H1 (cell line): ENCODE measurements at regions of chr17 and their contacts with region 1.

Region 1: DNA sequence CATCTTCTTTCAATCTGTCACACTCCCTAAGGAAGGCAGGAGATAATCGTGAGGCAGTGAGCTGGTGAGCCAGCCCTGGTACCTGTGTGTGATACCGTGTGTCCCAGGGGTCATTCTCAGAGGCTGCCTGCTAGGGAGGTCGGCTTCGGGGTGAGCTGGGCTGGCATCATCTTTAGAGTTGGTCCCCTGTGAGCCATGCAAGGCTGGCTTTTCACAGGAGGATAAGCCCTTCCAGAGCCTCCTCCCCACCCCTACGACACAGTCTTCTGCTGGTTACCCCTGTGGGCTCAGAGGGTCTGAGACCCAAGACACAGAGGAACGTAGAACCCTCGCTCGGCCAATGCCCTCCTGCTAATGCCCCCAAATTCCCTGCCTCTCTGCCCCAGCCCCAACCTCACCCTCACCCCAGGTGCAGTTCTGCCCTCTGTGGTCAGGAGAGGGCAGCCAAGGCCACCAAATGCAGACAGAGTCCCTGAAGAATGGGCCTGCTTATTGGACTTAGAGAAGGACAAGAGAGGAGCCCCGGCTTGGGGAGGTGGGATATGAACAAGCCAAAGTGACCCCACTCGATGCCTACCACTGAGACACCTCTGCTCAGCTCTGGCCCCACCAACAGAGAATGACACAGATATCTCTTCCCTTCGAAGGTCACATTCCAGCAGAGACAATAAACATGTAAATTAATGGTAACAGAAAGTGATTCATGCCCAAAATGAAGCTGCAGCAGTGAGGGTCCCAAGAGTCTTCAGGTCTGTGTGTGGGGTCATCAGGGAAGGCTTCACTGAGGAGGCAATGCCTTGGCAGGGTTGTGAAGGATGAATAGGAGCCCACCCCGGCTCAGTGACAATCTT is 80.8 kb upstream of the CCL1 start:
- DNase-seq: peak in 1 of 2 experiments; percentile 62
- H3K4me3 ChIP-seq: no peak overlapping the region
- H3K27ac ChIP-seq: no peak overlapping the region
- H3K4me1 ChIP-seq: peaks cover 0 to 4% (median under 1%) of the 10 kb centered on the region in 4 experiments; a peak in 1 of 7 replicates
- H3K27me3 ChIP-seq: no peaks in the 10 kb centered on the region
- CTCF ChIP-seq: peak; percentile 80 to 83 (median 81)
- EP300 ChIP-seq: no peak
- POLR2A ChIP-seq: no peak
- RAD21 ChIP-seq: peak; percentile 89 to 93

Region 2: DNA sequence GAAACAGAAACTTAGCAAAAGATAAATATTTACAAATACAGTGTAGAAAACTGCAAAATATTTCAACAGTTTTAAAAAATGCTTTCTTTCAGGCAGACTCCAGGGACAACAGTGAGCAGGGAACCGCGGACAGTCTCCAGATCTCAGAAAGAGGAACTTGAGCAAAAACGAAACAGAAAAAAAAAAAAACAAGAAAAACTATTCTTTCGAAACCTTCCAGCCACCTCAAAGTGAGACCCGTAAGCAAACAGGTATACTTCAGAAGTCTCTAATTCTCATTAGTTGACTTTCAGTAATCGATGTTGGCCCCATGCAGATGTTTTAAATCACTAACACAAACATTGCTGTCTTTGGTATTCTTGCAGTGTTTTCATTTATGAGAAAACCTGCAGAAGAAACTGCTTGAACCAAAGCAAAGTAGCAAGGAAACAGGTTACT is 65.2 kb before region 1 on chr17:
- CTCF ChIA-PET with region 1: no interaction called
- POLR2A ChIA-PET with region 1: no interaction called
- DNase-seq: no peak
- H3K4me3 ChIP-seq: no peak overlapping the region
- H3K27ac ChIP-seq: no peak overlapping the region
- H3K4me1 ChIP-seq: no peaks in the 10 kb centered on the region
- H3K27me3 ChIP-seq: no peaks in the 10 kb centered on the region
- CTCF ChIP-seq: no peak
- EP300 ChIP-seq: no peak
- POLR2A ChIP-seq: no peak
- RAD21 ChIP-seq: no peak

Region 3: DNA sequence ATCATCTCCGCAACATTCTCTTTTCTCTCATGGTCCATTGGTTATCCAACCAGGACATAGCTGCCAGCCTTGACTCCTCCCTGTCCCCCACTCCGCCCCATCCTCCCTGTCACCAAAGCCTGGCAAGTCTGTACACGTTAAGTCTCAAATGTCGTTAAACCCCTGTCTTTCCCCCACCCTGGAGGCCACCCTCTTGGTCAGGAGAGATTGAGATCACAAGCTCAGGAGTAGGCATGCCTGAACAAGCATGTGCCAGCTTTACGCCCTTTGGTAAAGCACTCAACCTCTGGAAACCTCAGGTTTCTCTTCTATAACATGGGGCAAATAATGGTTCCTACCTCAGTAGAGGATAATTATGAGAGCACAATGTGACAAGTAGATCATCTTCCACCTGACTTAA is 42.7 kb before region 1 on chr17:
- CTCF ChIA-PET with region 1: no interaction called
- POLR2A ChIA-PET with region 1: no interaction called
- DNase-seq: no peak
- H3K4me3 ChIP-seq: no peak overlapping the region
- H3K27ac ChIP-seq: no peak overlapping the region
- H3K4me1 ChIP-seq: peaks cover 0 to 4% (median 0%) of the 10 kb centered on the region in 4 experiments; a peak in 2 of 7 replicates
- H3K27me3 ChIP-seq: no peaks in the 10 kb centered on the region; a peak in 2 of 7 replicates
- CTCF ChIP-seq: no peak
- EP300 ChIP-seq: no peak
- POLR2A ChIP-seq: no peak
- RAD21 ChIP-seq: no peak

Region 4: GRCh38 chr17:34456121-34456520 is 12.3 kb after region 1 on chr17:
- CTCF ChIA-PET with region 1: interaction called, 22 read pairs
- POLR2A ChIA-PET with region 1: interaction called, 3 read pairs
- DNase-seq: no peak
- H3K4me3 ChIP-seq: no peak overlapping the region
- H3K27ac ChIP-seq: no peak overlapping the region
- H3K4me1 ChIP-seq: no peaks in the 10 kb centered on the region
- H3K27me3 ChIP-seq: peaks cover 0 to 1% (median 0%) of the 10 kb centered on the region in 4 experiments; a peak in 2 of 7 replicates
- CTCF ChIP-seq: no peak
- EP300 ChIP-seq: no peak
- POLR2A ChIP-seq: no peak
- RAD21 ChIP-seq: no peak

Region 5: DNA sequence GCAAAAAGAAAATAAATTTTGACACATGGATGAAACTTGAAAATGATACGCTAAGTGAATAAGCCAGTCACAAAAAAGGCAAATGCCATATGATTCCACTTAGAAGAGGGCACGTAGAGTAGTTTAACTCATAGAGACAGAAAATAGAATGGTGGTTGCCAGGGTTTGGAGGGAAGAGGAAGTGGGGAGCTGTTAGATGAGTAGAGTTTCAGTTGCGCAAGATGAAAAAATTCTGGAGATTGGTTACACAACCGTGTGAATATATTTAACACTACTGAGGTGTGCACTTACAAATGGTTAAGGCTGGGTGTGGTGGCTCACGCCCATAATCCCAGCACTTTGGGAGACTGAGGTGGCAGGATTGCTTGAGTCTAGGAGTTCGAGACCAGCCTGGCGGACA is 42.2 kb after region 1 on chr17:
- CTCF ChIA-PET with region 1: interaction called, 10 read pairs
- POLR2A ChIA-PET with region 1: interaction called, 3 read pairs
- DNase-seq: no peak
- H3K4me3 ChIP-seq: no peak overlapping the region
- H3K27ac ChIP-seq: no peak overlapping the region
- H3K4me1 ChIP-seq: peaks cover 0 to 2% (median 0%) of the 10 kb centered on the region in 4 experiments; a peak in 1 of 7 replicates
- H3K27me3 ChIP-seq: no peaks in the 10 kb centered on the region; a peak in 2 of 7 replicates
- CTCF ChIP-seq: no peak
- EP300 ChIP-seq: no peak
- POLR2A ChIP-seq: no peak
- RAD21 ChIP-seq: no peak

Region 6: DNA sequence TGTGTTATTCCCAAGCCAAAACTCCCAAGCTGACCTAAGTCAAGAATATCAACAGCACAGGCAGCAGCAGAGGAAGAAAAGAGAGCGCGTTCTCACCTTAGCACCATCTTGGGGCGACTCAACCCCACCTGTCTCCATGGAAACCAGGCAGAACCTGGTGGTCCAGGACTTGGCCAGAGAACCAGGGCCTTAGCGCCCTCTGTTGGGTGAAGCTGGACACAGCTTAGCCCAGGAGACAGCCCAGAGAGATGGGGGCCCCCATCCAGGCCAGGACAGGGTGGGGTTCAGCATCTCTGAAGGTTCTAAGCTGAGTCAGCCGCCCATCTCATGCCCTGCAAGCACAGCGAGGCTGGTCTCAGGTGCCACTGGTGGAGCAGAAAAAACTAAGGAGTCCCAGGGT is 75.4 kb after region 1 on chr17:
- CTCF ChIA-PET with region 1: interaction called, 95 read pairs
- POLR2A ChIA-PET with region 1: no interaction called
- DNase-seq: peak; percentile 25 to 85
- H3K4me3 ChIP-seq: no peak overlapping the region
- H3K27ac ChIP-seq: no peak overlapping the region
- H3K4me1 ChIP-seq: 0 out of 7 replicates have a peak, but pooled peaks cover 0 to 4% (median 0%) of the 10 kb centered on the region in 4 experiments
- H3K27me3 ChIP-seq: no peaks in the 10 kb centered on the region; a peak in 1 of 7 replicates
- CTCF ChIP-seq: peak; percentile 83 to 94 (median 92)
- EP300 ChIP-seq: no peak
- POLR2A ChIP-seq: no peak
- RAD21 ChIP-seq: peak; percentile 86 to 94